Cardiac septum (tissue), 1 donor: ENCODE measurements at regions of chr11 and their contacts with region 1.

Region 1: GRCh38 chr11:36292311-36292722 is 3.1 kb upstream of the COMMD9 start:
- DNase-seq: no peak

Region 2: DNA sequence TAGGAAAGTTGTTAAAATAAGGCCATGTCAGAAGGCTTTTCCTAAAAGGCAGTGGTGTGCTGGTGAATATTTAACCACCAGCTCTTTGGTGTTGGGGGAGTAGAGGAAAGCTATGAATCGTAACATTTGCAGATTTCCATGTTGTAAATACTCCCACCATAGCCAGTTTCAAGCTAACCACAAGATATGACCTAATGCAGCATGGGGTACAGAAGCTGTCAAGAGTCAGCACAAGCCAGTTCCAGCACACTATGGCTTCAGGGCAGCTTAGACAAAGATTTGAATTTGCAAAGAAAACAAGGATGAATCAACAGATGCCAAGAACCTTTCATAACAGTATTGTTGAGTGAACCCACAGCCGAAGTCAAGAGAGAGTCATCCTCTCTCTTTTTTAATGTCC is 43.1 kb before region 1 on chr11:
- intact Hi-C with region 1: no loop called
- DNase-seq: no peak

Region 3: DNA sequence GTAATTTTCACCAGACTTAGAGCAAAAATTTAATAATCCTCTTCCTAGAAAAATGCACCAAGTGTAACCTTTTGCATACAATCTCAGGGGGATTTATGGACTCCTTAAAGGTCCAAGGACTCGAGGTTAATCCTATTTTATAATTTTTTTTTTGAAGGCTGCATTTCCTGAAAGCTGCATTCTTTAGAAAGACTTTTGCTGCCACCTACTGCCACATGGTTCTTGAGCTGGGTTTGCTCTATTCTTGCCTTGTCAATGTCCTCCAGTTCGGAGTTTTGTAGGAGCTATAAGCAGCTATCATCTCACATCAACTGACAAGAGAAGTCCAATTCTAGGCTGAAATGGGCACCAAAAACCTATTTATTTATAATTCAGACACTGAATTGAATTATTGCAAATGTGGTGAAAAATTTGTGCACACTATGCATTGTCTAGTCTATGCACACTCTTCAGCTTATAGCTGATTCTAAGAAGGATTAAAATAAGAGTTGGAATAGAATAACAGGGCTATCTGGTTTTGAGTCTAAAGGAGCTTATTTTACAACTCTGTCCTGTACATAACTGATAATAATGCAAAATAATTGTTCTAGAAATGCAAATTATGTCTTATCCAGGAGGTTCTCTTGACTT is 186.5 kb after region 1 on chr11:
- intact Hi-C with region 1: loop called (anchors 2 kb)
- DNase-seq: no peak

Region 4: GRCh38 chr11:36492724-36493304 is 200.5 kb after region 1 on chr11:
- intact Hi-C with region 1: loop called (anchors 5 kb)
- DNase-seq: no peak